Mammary epithelial cell (primary cell): ENCODE measurements at regions of chr2 and their contacts with region 1.

Region 1: DNA sequence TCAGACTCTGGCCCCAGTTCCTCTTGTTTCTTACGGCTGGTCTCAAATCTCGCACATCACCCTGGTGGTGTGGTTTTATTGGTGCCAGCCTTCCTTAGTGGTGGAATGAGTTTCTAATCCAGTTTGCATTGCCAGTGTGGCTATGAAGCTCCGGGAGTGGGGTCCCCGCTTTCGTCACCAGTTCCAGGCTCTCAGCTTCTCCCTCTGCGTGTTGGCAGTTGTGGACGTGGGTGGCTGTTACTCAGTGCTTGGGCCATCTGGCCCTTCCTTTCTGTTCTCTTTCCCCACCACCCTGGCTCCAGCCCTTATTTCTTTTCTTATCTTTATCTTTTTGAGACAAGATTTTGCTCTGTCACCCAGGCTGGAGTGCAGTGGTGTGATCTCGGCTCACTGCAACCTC is 30.1 kb downstream of the EFR3B start:
- DNase-seq: no peak
- H3K4me3 ChIP-seq: no peak overlapping the region
- H3K27ac ChIP-seq: no peak overlapping the region
- H3K4me1 ChIP-seq: no peaks in the 10 kb centered on the region
- H3K27me3 ChIP-seq: peaks cover 43% of the 10 kb centered on the region
- CTCF ChIP-seq: no peak

Region 2: DNA sequence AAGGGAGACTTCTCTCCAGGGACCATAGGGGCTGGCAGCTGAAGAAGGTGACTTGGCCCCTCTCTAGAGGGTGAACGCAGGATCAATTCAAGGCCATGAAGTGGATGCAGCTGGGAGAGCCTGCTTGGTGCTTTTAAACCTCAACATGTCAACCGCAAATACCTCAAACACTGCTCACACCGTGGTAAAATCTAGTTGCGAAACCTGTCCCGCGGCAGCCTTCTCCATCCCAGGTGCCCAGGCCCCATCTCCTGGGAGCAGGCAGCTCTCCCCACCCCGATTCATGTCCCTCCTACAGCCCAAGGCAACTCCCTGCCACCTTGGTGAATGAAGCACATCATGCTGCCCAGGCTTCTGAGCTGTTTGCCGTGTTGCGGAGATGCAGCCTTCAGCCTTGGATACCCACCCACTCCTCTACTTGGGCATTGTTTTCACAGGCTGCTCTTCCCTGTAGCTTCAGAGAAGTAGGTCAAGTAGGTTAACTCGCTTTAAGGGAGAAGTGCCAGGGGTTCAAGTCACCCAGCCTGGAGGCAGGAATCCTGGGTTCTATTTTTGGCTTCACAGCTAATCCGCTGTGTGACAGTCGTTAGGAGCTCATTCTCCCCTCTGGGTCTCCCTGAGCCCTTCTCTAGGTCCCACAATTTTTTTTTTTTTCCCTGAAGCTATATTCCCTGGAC is 36.3 kb before region 1 on chr2:
- CTCF ChIA-PET with region 1: no interaction called
- dilution Hi-C with region 1: loop called (anchors 5 kb)
- in situ Hi-C with region 1: no loop called
- intact Hi-C with region 1: no loop called
- DNase-seq: no peak
- H3K4me3 ChIP-seq: no peak overlapping the region
- H3K27ac ChIP-seq: no peak overlapping the region
- H3K4me1 ChIP-seq: no peaks in the 10 kb centered on the region
- H3K27me3 ChIP-seq: peaks cover 2% of the 10 kb centered on the region
- CTCF ChIP-seq: no peak